ENCODE measurements at regions of chr6 and their contacts with region 1.

Region 1: DNA sequence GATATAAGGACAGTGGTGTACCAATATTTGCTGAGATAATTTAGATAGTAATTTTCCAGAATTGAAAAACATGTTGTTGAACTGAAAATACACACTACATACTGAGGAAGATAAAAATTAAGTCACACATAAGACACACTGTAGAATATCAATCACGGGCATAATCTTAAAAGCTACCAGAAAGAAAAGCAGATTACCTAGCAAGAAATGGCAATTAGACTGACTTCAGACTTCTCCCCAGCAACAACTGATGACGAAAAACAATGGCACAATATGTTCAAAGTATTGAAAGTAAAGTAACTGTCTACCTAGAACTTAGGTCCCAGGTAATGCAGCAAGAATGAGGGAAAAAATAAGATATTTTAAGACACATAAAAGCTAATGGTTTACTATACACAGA is 46.5 kb downstream of the NOL7 start:
- DNase-seq: no peak
- ATAC-seq: no peak
- H3K4me3 ChIP-seq: no peak overlapping the region
- H3K4me3 Mint-ChIP-seq: peak overlapping the region in 6 of 10 donors; percentile 5 to 44 (median 26)
- H3K27ac ChIP-seq: no peak overlapping the region
- H3K27ac Mint-ChIP-seq: peak overlapping the region in 2 of 9 donors; percentile 14 to 18
- H3K4me1 ChIP-seq: peaks cover 18 to 43% of the 10 kb centered on the region in 2 donors
- H3K4me1 Mint-ChIP-seq: peaks cover 57 to 93% (median 85%) of the 10 kb centered on the region in 7 donors
- H3K27me3 ChIP-seq: no peaks in the 10 kb centered on the region
- H3K27me3 Mint-ChIP-seq: no peaks in the 10 kb centered on the region

Region 2: GRCh38 chr6:13641315-13641714 is 20.3 kb before region 1 on chr6:
- CTCF ChIA-PET with region 1: no interaction called
- POLR2A ChIA-PET with region 1: no interaction called
- intact Hi-C with region 1: loop called in 1 of 2 experiments (anchors 2 kb)
- DNase-seq: no peak
- ATAC-seq: no peak
- H3K4me3 ChIP-seq: no peak overlapping the region
- H3K4me3 Mint-ChIP-seq: no peak overlapping the region
- H3K27ac ChIP-seq: no peak overlapping the region
- H3K27ac Mint-ChIP-seq: peak overlapping the region in 1 of 9 donors; percentile 27
- H3K4me1 ChIP-seq: no peaks in the 10 kb centered on the region
- H3K4me1 Mint-ChIP-seq: peaks cover 17 to 31% (median 24%) of the 10 kb centered on the region in 7 donors
- H3K27me3 ChIP-seq: no peaks in the 10 kb centered on the region
- H3K27me3 Mint-ChIP-seq: no peaks in the 10 kb centered on the region

Region 3: GRCh38 chr6:13742961-13743735 is 81.5 kb after region 1 on chr6:
- CTCF ChIA-PET with region 1: no interaction called
- POLR2A ChIA-PET with region 1: no interaction called
- intact Hi-C with region 1: no loop called
- DNase-seq: no peak
- ATAC-seq: no peak
- H3K4me3 ChIP-seq: no peak overlapping the region
- H3K4me3 Mint-ChIP-seq: peak overlapping the region in 4 of 10 donors; percentile 30 to 60 (median 60)
- H3K27ac ChIP-seq: no peak overlapping the region
- H3K27ac Mint-ChIP-seq: no peak overlapping the region
- H3K4me1 ChIP-seq: peaks cover 0 to 4% of the 10 kb centered on the region in 2 donors
- H3K4me1 Mint-ChIP-seq: peaks cover 0 to 2% (median 0%) of the 10 kb centered on the region in 7 donors
- H3K27me3 ChIP-seq: no peaks in the 10 kb centered on the region
- H3K27me3 Mint-ChIP-seq: no peaks in the 10 kb centered on the region

Region 4: GRCh38 chr6:13814176-13814937 is 152.7 kb after region 1 on chr6 and contains the start of gene MCUR1:
- CTCF ChIA-PET with region 1: no interaction called
- POLR2A ChIA-PET with region 1: no interaction called
- intact Hi-C with region 1: no loop called
- DNase-seq: peak; percentile 69 to 87 (median 76)
- ATAC-seq: peak; percentile 91
- H3K4me3 ChIP-seq: peak within 1 kb of the TSS; percentile 71
- H3K4me3 Mint-ChIP-seq: peak within 1 kb of the TSS; percentile 87 to 92 (median 90)
- H3K27ac ChIP-seq: peak within 1 kb of the TSS; percentile 82
- H3K27ac Mint-ChIP-seq: peak within 1 kb of the TSS; percentile 60 to 93 (median 85)
- H3K4me1 ChIP-seq: peaks cover 0 to 13% of the 10 kb centered on the region in 2 donors
- H3K4me1 Mint-ChIP-seq: peaks cover 17 to 40% (median 38%) of the 10 kb centered on the region in 7 donors
- H3K27me3 ChIP-seq: no peaks in the 10 kb centered on the region
- H3K27me3 Mint-ChIP-seq: peaks cover 0 to 25% (median 0%) of the 10 kb centered on the region in 5 donors
- total RNA-seq, gene MCUR1: 5.7 to 20.6 (median 10.0) TPM

Region 5: DNA sequence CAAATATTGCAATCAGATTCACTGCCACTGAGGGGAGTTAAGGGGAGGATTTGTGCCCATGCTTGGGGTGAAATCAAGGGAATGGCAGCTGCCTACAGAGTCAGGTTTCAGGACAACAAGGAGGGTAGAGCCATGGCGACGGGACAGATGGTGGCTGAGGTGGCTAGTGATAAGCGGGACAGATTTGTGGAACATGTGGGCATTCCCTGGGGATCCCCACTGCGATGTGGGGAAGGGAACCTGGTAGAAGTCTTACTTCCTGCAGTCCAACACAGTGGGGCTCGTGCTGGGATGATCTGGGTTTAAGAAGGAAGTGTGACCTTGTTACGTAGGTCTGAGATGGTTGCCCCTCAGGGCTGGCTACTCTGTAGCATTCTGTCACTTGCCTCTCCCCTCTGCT is 1292.2 kb after region 1 on chr6:
- CTCF ChIA-PET with region 1: no interaction called
- POLR2A ChIA-PET with region 1: no interaction called
- intact Hi-C with region 1: no loop called
- DNase-seq: no peak
- ATAC-seq: no peak
- H3K4me3 ChIP-seq: no peak overlapping the region
- H3K4me3 Mint-ChIP-seq: no peak overlapping the region
- H3K27ac ChIP-seq: no peak overlapping the region
- H3K27ac Mint-ChIP-seq: no peak overlapping the region
- H3K4me1 ChIP-seq: no peaks in the 10 kb centered on the region
- H3K4me1 Mint-ChIP-seq: peaks cover 0 to under 1% (median 0%) of the 10 kb centered on the region in 7 donors
- H3K27me3 ChIP-seq: no peaks in the 10 kb centered on the region
- H3K27me3 Mint-ChIP-seq: no peaks in the 10 kb centered on the region

Measured in naive thymus-derived CD4-positive, alpha-beta T cell (primary cell).